Activated CD8-positive, alpha-beta T cell treated with anti-CD3 and anti-CD28 coated beads for 36 hours (primary cell): ENCODE measurements at regions of chr14 and their contacts with region 1.

Region 1: DNA sequence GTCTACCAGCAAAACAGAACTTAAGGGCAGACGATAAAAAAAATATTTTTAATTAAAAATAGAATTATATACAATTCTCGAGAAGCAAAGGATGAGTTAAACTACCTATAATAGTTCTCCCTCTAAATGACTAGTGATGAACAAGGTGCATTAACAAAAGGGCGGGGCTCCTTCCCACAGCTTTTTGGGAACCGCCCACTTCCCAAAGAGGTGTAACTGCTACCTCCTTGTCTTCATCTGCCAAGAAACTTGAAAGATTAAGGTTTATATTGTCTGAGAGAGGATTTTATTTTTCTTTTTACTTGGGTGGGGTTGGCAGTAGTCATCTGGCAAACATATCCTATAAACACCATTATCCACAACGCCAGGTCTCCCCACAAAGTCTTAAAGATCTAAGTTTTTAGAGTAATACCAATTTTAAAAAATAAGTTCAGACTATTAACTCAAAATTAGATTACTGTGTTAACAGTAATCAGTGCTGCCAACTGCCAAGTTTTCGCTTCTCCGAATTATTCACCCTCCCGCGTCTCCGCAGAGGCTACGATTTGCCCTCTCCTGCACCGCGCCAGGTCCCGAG is 931 bp downstream of the RALGAPA1 start:
- DNase-seq: peak; percentile 46
- ATAC-seq: no peak
- H3K4me3 Mint-ChIP-seq: peak overlapping the region; percentile 99
- H3K27ac Mint-ChIP-seq: peak overlapping the region; percentile 97
- H3K4me1 Mint-ChIP-seq: peaks cover 21% of the 10 kb centered on the region
- H3K27me3 Mint-ChIP-seq: no peaks in the 10 kb centered on the region
- CTCF ChIP-seq: no peak

Region 2: GRCh38 chr14:35747379-35747778 is 60.8 kb before region 1 on chr14:
- CTCF ChIA-PET with region 1: no interaction called
- POLR2A ChIA-PET with region 1: no interaction called
- intact Hi-C with region 1: loop called (anchors 10 kb)
- DNase-seq: no peak
- ATAC-seq: no peak
- H3K4me3 Mint-ChIP-seq: no peak overlapping the region
- H3K27ac Mint-ChIP-seq: no peak overlapping the region
- H3K4me1 Mint-ChIP-seq: peaks cover 8% of the 10 kb centered on the region
- H3K27me3 Mint-ChIP-seq: no peaks in the 10 kb centered on the region
- CTCF ChIP-seq: no peak

Region 3: DNA sequence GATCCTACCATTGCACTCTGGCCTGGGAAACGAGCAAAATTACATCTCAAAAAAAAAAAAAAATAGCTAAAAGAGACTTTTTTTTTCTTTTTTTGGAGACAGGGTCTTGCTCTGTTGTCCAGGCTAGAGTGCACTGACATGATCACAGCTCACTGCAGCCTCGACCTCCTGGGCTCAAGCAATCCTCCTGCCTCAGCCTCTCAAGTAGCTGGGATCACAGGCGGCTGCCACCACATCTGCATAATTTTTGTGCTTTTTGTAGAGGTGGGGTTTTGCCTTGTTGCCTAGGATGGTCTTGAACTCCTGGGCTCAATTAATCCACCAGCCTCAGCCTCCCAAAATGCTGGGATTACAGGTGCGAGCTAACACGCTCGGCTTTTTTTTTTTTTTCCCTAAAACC is 10.4 kb before region 1 on chr14:
- CTCF ChIA-PET with region 1: no interaction called
- POLR2A ChIA-PET with region 1: no interaction called
- intact Hi-C with region 1: no loop called
- DNase-seq: no peak
- ATAC-seq: no peak
- H3K4me3 Mint-ChIP-seq: no peak overlapping the region
- H3K27ac Mint-ChIP-seq: no peak overlapping the region
- H3K4me1 Mint-ChIP-seq: peaks cover 36% of the 10 kb centered on the region
- H3K27me3 Mint-ChIP-seq: no peaks in the 10 kb centered on the region
- CTCF ChIP-seq: no peak

Region 4: GRCh38 chr14:35826218-35826951 is 18.2 kb after region 1 on chr14 and contains the start of gene BRMS1L:
- CTCF ChIA-PET with region 1: interaction called, 15 read pairs
- POLR2A ChIA-PET with region 1: no interaction called
- intact Hi-C with region 1: no loop called
- DNase-seq: peak; percentile 99
- ATAC-seq: peak; percentile 98
- H3K4me3 Mint-ChIP-seq: peak within 1 kb of the TSS; percentile 80
- H3K27ac Mint-ChIP-seq: peak within 1 kb of the TSS; percentile 76
- H3K4me1 Mint-ChIP-seq: peaks cover 21% of the 10 kb centered on the region
- H3K27me3 Mint-ChIP-seq: no peaks in the 10 kb centered on the region
- CTCF ChIP-seq: no peak
- total RNA-seq, gene BRMS1L: 4.3 to 5.5 TPM